Prostate gland (tissue), 2 donors: ENCODE measurements at regions of chr1 and their contacts with region 1.

Region 1: GRCh38 chr1:157496121-157496526 is 56.2 kb downstream of the FCRL5 start:
- DNase-seq: no peak
- H3K4me3 ChIP-seq: no peak overlapping the region
- H3K27ac ChIP-seq: no peak overlapping the region
- H3K4me1 ChIP-seq: no peaks in the 10 kb centered on the region
- H3K27me3 ChIP-seq: peaks cover 2% of the 10 kb centered on the region
- CTCF ChIP-seq: peak; percentile 40 to 57 (median 46)
- POLR2A ChIP-seq: no peak

Region 2: GRCh38 chr1:157369808-157370521 is 126.2 kb before region 1 on chr1:
- intact Hi-C with region 1: loop called (anchors 5 kb)
- DNase-seq: peak; percentile 32
- H3K4me3 ChIP-seq: no peak overlapping the region
- H3K27ac ChIP-seq: no peak overlapping the region
- H3K4me1 ChIP-seq: no peaks in the 10 kb centered on the region
- H3K27me3 ChIP-seq: no peaks in the 10 kb centered on the region
- CTCF ChIP-seq: peak; percentile 68 to 80 (median 72)
- POLR2A ChIP-seq: no peak